ENCODE measurements at regions of chr4 and their contacts with region 1.

Region 1: DNA sequence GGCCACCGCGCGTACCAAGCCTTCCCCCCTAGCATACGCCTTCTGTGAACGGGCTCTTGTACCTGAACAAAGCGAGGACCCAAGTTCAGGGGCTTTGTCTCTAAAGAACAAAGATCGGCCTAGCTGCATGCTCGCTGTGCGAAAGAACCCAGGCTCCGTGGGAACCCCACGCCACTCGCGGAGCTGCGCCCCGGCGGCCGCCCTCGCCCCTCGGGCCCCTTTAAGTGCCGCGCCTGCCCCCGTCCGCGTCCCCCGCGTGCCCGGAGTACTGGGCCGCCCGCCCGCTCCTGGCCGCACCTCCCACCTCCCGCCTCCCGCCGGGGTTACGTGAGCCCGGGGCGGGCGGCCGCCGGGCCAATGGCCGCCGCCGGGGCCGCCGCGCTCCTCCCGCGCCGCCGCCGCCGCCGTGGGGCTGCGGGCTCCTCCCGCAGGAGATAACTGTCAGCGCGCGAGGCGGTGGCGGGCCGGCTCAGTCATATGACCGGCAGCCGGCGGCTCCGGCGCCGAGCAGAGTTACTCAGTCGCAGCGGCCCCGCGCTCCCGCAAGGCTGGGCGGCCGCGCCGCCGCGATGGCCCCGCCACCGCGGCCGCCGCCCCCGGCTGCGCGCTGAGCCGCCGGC is at the start of gene FNIP2:
- DNase-seq: peak; percentile 68 to 83 (median 79)
- H3K4me3 ChIP-seq: peak within 1 kb of the TSS; percentile 50 to 95 (median 90)
- H3K4me3 Mint-ChIP-seq: peak within 1 kb of the TSS; percentile 98 to 100
- H3K27ac ChIP-seq: peak within 1 kb of the TSS; percentile 86 to 90
- H3K27ac Mint-ChIP-seq: peak within 1 kb of the TSS; percentile 93 to 99 (median 96)
- H3K4me1 ChIP-seq: peaks cover 41 to 51% of the 10 kb centered on the region in 2 donors
- H3K4me1 Mint-ChIP-seq: peaks cover 60% of the 10 kb centered on the region
- H3K27me3 ChIP-seq: no peaks in the 10 kb centered on the region
- H3K27me3 Mint-ChIP-seq: peaks cover 0 to 2% (median 0%) of the 10 kb centered on the region in 3 donors
- CTCF ChIP-seq: no peak
- polyA plus RNA-seq, gene FNIP2: 3.5 to 7.7 (median 5.7) TPM

Region 2: DNA sequence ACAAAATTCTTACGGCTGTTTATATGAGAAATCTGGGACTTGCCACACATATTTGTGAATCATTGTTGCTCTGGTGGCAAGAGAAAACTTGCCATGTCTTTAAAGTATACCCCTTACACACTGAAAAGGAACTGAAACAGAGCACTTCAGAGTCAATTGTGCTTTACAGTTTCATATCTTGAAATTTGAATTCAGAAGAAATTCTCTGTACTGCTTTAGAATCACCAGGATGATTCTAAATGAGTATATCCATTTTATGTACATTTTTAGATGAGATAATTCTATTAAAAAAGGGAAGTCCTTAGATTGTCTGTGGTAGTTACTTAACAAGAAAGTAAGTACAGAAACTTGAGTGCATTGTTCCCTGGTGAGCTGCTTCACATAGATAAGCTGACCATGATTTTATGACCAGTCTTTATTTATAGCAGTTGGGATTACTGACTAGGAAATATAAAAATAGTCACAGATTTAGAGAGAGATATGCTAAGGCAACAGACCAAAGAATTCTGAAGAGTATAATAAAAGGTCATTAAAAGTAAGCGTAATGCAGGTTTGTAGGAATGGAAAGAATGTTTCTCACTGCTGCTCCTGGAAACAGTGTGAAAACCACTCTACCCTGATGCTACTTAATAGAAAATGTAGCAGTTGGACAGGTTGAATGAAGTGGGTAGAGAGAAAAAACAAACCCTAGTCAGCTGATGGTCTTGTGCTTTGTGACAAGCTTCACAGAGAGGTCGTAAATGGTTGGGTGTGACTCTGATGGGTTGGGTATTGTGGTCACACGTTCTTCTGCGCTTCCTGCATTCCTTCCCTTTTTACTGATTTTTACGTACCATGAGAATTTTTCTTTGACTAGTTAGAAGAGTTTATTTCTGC is 41.2 kb after region 1 on chr4:
- intact Hi-C with region 1: loop called (anchors 5 kb)
- DNase-seq: peak; percentile 89 to 94 (median 90)
- H3K4me3 ChIP-seq: peak overlapping the region; percentile 23 to 53 (median 30)
- H3K4me3 Mint-ChIP-seq: peak overlapping the region; percentile 35 to 82
- H3K27ac ChIP-seq: peak overlapping the region; percentile 95 to 98
- H3K27ac Mint-ChIP-seq: peak overlapping the region; percentile 96 to 99 (median 99)
- H3K4me1 ChIP-seq: peaks cover 91 to 98% of the 10 kb centered on the region in 2 donors
- H3K4me1 Mint-ChIP-seq: peaks cover 87% of the 10 kb centered on the region
- H3K27me3 ChIP-seq: no peaks in the 10 kb centered on the region
- H3K27me3 Mint-ChIP-seq: peaks cover 0 to 3% (median 0%) of the 10 kb centered on the region in 3 donors
- CTCF ChIP-seq: no peak

Measured in CD14-positive monocyte (primary cell).